ENCODE measurements at regions of chr2 and their contacts with region 1.

Region 1: GRCh38 chr2:207473049-207473930 is 56.5 kb upstream of the CREB1 start:
- DNase-seq: peak; percentile 71
- ATAC-seq: peak; percentile 94
- H3K4me3 Mint-ChIP-seq: no peak overlapping the region
- H3K27ac Mint-ChIP-seq: no peak overlapping the region
- H3K4me1 Mint-ChIP-seq: peaks cover 16% of the 10 kb centered on the region
- H3K27me3 Mint-ChIP-seq: no peaks in the 10 kb centered on the region

Region 2: DNA sequence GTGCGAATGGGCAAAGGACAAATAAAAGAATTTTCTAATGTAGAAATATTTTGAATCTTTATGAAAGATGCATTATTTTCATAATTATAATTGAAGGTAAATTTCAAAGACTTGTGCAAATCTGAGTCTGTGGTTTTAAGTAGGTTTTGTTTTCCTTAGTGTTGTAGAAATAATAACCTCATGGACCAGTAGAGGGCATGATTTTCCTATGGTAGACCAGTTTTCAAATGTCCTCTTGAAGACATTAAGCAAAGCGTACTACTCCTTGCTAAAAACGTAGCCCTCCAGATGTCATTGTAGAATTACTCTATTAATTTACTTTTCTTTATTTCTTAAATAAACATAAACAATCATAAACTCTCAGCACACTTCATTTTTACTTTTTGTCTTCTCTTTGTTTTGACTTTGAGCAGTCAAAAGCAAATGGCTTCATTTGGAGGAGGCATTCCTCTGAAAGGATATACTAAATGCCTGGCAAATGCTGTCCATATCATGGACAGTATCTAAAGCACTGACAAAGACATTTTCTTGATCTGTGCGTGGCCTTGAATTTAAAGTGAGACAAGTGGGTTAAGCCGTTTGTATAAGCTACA is 916.8 kb before region 1 on chr2:
- CTCF ChIA-PET with region 1: no interaction called
- POLR2A ChIA-PET with region 1: no interaction called
- intact Hi-C with region 1: loop called (anchors 2 to 10 kb)
- DNase-seq: no peak
- ATAC-seq: peak; percentile 47
- H3K4me3 Mint-ChIP-seq: no peak overlapping the region
- H3K27ac Mint-ChIP-seq: no peak overlapping the region
- H3K4me1 Mint-ChIP-seq: peaks cover 24% of the 10 kb centered on the region
- H3K27me3 Mint-ChIP-seq: no peaks in the 10 kb centered on the region

Region 3: GRCh38 chr2:206800506-206801417 is 672.5 kb before region 1 on chr2:
- CTCF ChIA-PET with region 1: interaction called, 32 read pairs
- POLR2A ChIA-PET with region 1: no interaction called
- intact Hi-C with region 1: loop called (anchors 1 to 2 kb)
- DNase-seq: peak; percentile 61
- ATAC-seq: peak; percentile 40
- H3K4me3 Mint-ChIP-seq: peak overlapping the region; percentile 22
- H3K27ac Mint-ChIP-seq: peak overlapping the region; percentile 52
- H3K4me1 Mint-ChIP-seq: peaks cover 31% of the 10 kb centered on the region
- H3K27me3 Mint-ChIP-seq: no peaks in the 10 kb centered on the region

Region 4: GRCh38 chr2:207046724-207047123 is 426.6 kb before region 1 on chr2:
- CTCF ChIA-PET with region 1: interaction called, 6 read pairs
- POLR2A ChIA-PET with region 1: no interaction called
- intact Hi-C with region 1: loop called (anchors 1 to 2 kb)
- DNase-seq: peak; percentile 44
- ATAC-seq: peak; percentile 95
- H3K4me3 Mint-ChIP-seq: no peak overlapping the region
- H3K27ac Mint-ChIP-seq: peak overlapping the region; percentile 19
- H3K4me1 Mint-ChIP-seq: peaks cover 13% of the 10 kb centered on the region
- H3K27me3 Mint-ChIP-seq: no peaks in the 10 kb centered on the region

Region 5: GRCh38 chr2:207121784-207122183 is 351.5 kb before region 1 on chr2:
- CTCF ChIA-PET with region 1: interaction called, 5 read pairs
- POLR2A ChIA-PET with region 1: no interaction called
- intact Hi-C with region 1: loop called in 1 of 2 experiments (anchors 5 kb)
- DNase-seq: no peak
- ATAC-seq: no peak
- H3K4me3 Mint-ChIP-seq: no peak overlapping the region
- H3K27ac Mint-ChIP-seq: peak overlapping the region; percentile 26
- H3K4me1 Mint-ChIP-seq: peaks cover 60% of the 10 kb centered on the region
- H3K27me3 Mint-ChIP-seq: no peaks in the 10 kb centered on the region

Region 6: GRCh38 chr2:207230261-207231105 is 242.8 kb before region 1 on chr2:
- CTCF ChIA-PET with region 1: no interaction called
- POLR2A ChIA-PET with region 1: no interaction called
- intact Hi-C with region 1: loop called (anchors 5 kb)
- DNase-seq: no peak
- ATAC-seq: peak; percentile 54
- H3K4me3 Mint-ChIP-seq: no peak overlapping the region
- H3K27ac Mint-ChIP-seq: peak overlapping the region; percentile 79
- H3K4me1 Mint-ChIP-seq: peaks cover 46% of the 10 kb centered on the region
- H3K27me3 Mint-ChIP-seq: no peaks in the 10 kb centered on the region

Region 7: GRCh38 chr2:207328944-207329386 is 144.3 kb before region 1 on chr2:
- CTCF ChIA-PET with region 1: interaction called, 4 read pairs
- POLR2A ChIA-PET with region 1: no interaction called
- intact Hi-C with region 1: loop called in 1 of 2 experiments (anchors 5 kb)
- DNase-seq: peak; percentile 18
- ATAC-seq: peak; percentile 5
- H3K4me3 Mint-ChIP-seq: peak overlapping the region; percentile 55
- H3K27ac Mint-ChIP-seq: peak overlapping the region; percentile 88
- H3K4me1 Mint-ChIP-seq: peaks cover 62% of the 10 kb centered on the region
- H3K27me3 Mint-ChIP-seq: no peaks in the 10 kb centered on the region

Region 8: DNA sequence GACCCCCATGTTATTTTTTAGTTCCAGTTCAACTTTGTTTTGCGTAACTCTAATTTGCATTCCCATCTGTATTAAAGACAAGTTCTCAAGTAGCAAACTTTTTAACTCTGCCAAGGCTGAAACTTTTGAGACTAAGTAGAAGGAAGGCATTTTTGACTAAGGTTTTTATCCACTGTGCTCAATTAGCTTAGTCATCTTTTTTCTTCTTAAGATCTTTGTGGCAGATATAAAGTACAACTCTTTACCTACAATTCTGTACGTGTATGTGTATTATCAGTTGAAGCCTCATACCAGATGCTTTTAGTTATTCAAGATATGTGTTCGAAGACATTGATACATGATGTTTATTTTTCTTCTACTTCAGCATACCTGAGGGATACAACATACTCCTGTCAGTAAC is 98.1 kb after region 1 on chr2:
- CTCF ChIA-PET with region 1: no interaction called
- POLR2A ChIA-PET with region 1: no interaction called
- intact Hi-C with region 1: no loop called
- DNase-seq: no peak
- ATAC-seq: no peak
- H3K4me3 Mint-ChIP-seq: no peak overlapping the region
- H3K27ac Mint-ChIP-seq: no peak overlapping the region
- H3K4me1 Mint-ChIP-seq: peaks cover 29% of the 10 kb centered on the region
- H3K27me3 Mint-ChIP-seq: no peaks in the 10 kb centered on the region